ENCODE measurements at regions of chr11 and their contacts with region 1.

Region 1: DNA sequence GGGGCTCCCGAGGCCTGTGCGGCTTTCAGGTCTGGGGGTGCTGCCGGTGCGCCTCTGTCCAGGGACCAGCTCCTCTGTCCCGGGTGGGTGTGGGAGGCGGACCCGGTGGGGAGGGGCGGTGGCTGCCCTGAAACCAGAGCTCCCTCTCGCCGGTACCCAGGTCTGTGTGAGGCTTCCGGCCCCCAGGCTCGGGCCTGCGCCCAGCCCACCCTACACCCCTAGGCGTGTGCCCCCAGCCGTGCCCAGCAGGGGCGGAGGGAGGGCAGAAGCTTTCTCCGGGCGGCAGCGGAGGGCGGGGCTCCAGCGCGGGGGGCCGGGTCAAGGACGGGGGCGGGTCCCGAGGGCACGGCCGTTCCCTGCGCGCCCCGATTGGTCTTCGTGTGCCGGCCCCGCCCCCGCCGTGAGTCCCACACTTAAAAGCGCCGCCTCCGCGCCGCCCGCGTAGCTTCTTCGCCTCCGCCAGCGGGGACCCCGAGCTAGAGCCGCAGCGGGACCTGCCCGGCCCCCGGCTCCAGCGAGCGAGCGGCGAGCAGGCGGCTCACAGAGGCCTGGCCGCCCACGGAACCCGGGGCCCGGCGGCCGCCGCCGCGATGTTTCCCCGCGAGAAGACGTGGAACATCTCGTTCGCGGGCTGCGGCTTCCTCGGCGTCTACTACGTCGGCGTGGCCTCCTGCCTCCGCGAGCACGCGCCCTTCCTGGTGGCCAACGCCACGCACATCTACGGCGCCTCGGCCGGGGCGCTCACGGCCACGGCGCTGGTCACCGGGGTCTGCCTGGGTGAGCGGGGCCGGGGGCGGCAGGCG is 616 bp downstream of the PNPLA2 start:
- DNase-seq: peak; percentile 93
- ATAC-seq: peak; percentile 63
- H3K4me3 Mint-ChIP-seq: peak overlapping the region; percentile 72
- H3K27ac Mint-ChIP-seq: no peak overlapping the region
- H3K4me1 Mint-ChIP-seq: peaks cover 5% of the 10 kb centered on the region
- H3K27me3 Mint-ChIP-seq: no peaks in the 10 kb centered on the region
- CTCF ChIP-seq: no peak

Region 2: DNA sequence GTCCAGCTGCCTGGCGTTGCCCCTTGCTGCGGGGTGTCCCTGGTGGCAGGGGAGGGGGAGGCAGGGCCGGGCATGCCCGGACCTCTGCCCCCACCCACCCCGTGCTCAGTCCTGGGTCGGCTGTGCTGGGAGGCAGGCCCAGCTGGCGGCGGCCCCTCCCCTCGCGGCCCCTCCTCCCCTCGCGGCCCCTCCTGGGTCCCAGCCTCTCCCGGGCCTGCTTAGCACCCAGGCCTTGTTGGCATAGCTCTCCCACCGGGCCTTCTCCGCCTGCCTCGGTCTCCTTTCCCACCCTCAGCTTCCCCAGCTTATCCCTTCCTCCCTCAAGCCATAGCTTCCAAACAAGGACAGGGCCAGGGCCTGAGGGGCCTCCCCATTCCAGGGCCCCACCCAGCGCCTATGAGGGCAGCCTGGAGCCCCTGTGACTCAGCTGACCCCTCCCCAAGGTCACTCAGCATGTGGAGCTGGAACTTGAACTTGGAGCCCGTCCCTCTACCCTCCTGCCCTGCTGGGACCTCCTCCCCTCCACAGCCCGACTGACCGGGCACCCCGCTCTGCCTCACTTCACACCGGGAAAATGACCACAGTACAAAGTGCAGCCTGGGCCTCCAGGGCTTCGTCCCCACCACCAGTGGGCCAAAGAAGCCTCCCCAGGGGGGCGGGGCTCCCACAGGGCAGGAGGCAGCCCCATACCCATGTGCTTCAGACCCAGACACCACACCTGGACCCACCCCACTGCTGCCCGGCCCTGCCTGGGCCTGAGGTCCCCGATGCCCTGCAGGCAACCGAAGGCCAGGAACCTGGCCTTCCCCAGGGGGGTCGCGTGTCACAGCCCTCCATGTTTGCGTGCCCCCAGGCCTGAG is 112.1 kb before region 1 on chr11:
- CTCF ChIA-PET with region 1: no interaction called
- POLR2A ChIA-PET with region 1: no interaction called
- DNase-seq: peak; percentile 47
- ATAC-seq: peak; percentile 46
- H3K4me3 Mint-ChIP-seq: peak overlapping the region; percentile 62
- H3K27ac Mint-ChIP-seq: no peak overlapping the region
- H3K4me1 Mint-ChIP-seq: peaks cover 30% of the 10 kb centered on the region
- H3K27me3 Mint-ChIP-seq: no peaks in the 10 kb centered on the region
- CTCF ChIP-seq: 0 out of 2 replicates have a peak, but pooled peaks have one; percentile 13

Region 3: GRCh38 chr11:832321-833113 is 13.2 kb after region 1 on chr11 and contains the start of gene CD151:
- CTCF ChIA-PET with region 1: interaction called, 26 read pairs
- POLR2A ChIA-PET with region 1: interaction called, 38 read pairs
- DNase-seq: peak; percentile 70
- ATAC-seq: peak; percentile 33
- H3K4me3 Mint-ChIP-seq: peak within 1 kb of the TSS; percentile 73
- H3K27ac Mint-ChIP-seq: no peak within 1 kb of the TSS
- H3K4me1 Mint-ChIP-seq: peaks cover 40% of the 10 kb centered on the region
- H3K27me3 Mint-ChIP-seq: peaks cover 32% of the 10 kb centered on the region
- CTCF ChIP-seq: no peak
- total RNA-seq, gene CD151: 115 to 127 TPM (median 116 TPM) in 3 replicates

Region 4: DNA sequence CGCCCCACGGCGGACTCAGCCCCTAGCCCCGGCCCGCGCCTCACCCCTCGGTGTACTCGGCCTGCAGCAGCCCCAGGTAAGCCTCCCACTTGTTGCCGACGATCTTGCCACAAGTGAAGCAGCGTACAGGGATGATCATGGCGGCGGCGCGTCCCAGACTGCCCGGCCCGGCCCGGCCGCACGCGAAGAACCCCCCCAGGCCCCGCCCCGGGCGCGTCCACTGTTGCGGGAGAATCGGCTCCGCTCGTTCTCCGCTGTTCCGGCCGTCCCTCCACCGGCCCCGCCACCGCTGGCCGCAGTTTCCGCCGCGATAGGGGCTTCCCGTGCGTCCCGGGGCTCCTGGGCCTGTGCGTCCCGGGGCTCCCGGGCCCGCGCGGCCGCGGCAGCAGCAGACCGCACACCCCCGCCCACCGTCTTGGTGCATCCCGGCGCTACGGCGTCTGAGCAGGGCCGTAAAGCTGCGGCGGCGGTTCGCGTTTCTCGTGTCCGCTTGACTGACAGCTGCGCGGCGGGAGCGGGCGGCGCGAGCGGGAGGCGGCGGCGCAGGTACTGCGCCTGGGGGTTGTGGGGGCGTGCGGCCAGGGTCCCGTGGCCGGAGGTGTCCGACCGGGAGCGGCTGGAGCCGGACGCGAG is 23.2 kb after region 1 on chr11 and contains the starts of genes POLR2L and TSPAN4:
- CTCF ChIA-PET with region 1: interaction called, 7 read pairs
- POLR2A ChIA-PET with region 1: interaction called, 13 read pairs
- DNase-seq: peak; percentile 91
- ATAC-seq: peak; percentile 4
- H3K4me3 Mint-ChIP-seq: peak within 1 kb of the TSS; percentile 79
- H3K27ac Mint-ChIP-seq: peak within 1 kb of the TSS; percentile 60; the same call in 1 of the 2 replicates
- H3K4me1 Mint-ChIP-seq: peaks cover 23% of the 10 kb centered on the region
- H3K27me3 Mint-ChIP-seq: no peaks in the 10 kb centered on the region
- CTCF ChIP-seq: no peak
- total RNA-seq, gene POLR2L: 138 to 152 TPM (median 144 TPM) in 3 replicates
- total RNA-seq, gene TSPAN4: 92.8 to 95.2 TPM (median 94.3 TPM) in 3 replicates